ENCODE measurements at regions of chr22 and their contacts with region 1.

Region 1: GRCh38 chr22:32103658-32104315 is 55.3 kb downstream of the C22orf42 start:
- DNase-seq: no peak
- H3K4me3 Mint-ChIP-seq: no peak overlapping the region
- H3K27ac Mint-ChIP-seq: no peak overlapping the region
- H3K4me1 Mint-ChIP-seq: peaks cover 18% of the 10 kb centered on the region
- H3K27me3 Mint-ChIP-seq: no peaks in the 10 kb centered on the region
- CTCF ChIP-seq: peak; percentile 40

Region 2: DNA sequence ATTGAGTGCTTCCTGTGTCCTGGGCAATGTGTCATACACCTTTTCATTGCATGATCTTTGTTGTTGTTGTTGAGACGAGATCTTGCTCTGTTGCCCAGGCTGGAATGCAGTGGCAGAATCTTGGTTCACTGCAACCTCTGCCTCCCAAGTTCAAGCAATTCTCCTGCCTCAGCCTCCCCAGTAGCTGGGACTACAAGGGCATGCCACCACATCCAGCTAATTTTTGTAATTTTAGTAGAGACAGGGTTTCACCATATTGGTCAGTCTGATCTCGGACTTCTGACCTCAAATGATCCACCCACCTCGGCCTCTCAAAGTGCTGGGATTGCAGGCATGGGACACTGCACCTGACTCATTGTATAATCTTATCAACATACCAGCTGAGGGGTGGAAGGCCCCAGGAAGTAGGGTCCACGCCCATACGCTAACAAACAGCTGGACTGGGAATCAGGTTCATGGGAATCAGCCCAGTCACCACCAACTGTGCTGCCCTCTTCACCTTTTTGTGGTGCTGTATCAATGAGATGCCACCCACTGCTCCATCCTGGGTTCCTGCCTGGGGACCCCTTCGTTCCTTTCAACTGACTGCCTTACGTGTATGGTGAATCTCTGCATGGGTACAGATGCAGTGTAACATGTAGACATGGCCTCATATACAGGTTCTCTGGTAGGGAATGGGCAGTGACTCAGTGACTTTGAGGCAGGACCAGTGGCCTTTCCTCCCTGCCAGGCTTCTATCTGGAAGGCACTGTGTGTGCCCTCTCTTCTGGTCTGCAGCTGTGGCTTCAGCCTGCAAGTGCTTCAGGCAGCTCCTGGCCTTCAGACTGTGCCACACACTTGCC is 192.0 kb before region 1 on chr22:
- CTCF ChIA-PET with region 1: no interaction called
- intact Hi-C with region 1: no loop called
- DNase-seq: no peak
- H3K4me3 Mint-ChIP-seq: no peak overlapping the region
- H3K27ac Mint-ChIP-seq: no peak overlapping the region
- H3K4me1 Mint-ChIP-seq: no peaks in the 10 kb centered on the region
- H3K27me3 Mint-ChIP-seq: no peaks in the 10 kb centered on the region
- CTCF ChIP-seq: no peak

Region 3: GRCh38 chr22:32265882-32266767 is 162.3 kb after region 1 on chr22:
- CTCF ChIA-PET with region 1: interaction called, 13 read pairs
- intact Hi-C with region 1: loop called (anchors 1 kb)
- DNase-seq: peak; percentile 77
- H3K4me3 Mint-ChIP-seq: peak overlapping the region; percentile 14
- H3K27ac Mint-ChIP-seq: no peak overlapping the region
- H3K4me1 Mint-ChIP-seq: no peaks in the 10 kb centered on the region
- H3K27me3 Mint-ChIP-seq: peaks cover 12% of the 10 kb centered on the region
- CTCF ChIP-seq: peak; percentile 71

Region 4: DNA sequence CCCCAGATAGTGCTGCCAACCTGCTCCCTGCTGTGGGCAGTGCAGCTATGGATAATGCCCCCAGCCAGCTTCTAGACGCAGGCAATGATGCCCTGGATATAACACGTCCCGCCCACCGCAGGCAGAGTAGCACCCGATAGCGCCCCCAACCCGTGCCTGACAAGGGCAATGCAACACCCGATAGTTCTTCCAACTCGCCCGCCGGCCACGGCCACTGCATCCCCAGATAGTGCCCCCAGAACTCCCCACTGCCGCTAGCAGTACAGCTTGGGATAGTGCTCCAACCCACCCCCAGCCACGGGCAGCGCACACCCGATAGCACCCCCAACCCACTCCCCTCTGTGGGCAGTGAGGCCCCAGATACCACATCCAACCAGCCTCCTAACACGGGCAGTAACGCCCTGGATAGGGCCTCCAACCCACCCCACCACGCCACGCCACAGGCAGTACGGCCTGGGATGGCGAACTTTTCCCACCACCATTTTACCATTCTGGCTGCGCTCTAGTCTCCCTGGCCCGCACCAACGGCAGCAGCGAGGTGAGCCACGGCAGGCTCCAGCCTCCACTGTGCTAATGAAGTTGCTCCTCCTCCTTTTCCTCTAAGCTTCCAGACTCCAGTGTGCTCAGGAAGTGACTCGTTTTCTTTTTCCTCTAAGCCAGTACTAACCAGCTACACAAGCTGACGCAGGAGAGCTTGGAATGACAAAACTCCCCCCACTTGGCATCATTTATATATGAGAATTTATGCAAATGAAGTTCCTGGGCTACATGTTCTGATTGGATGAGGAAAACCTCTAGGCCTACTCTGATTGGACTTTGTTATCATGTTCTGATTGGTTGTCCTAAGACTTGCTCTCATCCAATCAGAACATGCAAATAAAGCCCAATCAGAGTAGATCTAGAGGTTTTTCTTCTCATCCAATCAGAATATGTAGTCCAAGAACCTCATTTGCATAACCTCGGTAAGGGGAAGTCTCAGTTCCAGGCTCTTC is 250.9 kb after region 1 on chr22:
- CTCF ChIA-PET with region 1: no interaction called
- intact Hi-C with region 1: loop called (anchors 5 kb)
- DNase-seq: no peak
- H3K4me3 Mint-ChIP-seq: no peak overlapping the region
- H3K27ac Mint-ChIP-seq: no peak overlapping the region
- H3K4me1 Mint-ChIP-seq: no peaks in the 10 kb centered on the region
- H3K27me3 Mint-ChIP-seq: peaks cover 34% of the 10 kb centered on the region
- CTCF ChIP-seq: no peak